ENCODE measurements at regions of chr12 and their contacts with region 1.

Region 1: GRCh38 chr12:1939801-1940607 is 21.6 kb upstream of the CACNA2D4 start:
- DNase-seq: peak; percentile 83 to 96 (median 88)
- ATAC-seq: peak; percentile 76
- H3K4me3 ChIP-seq: no peak overlapping the region
- H3K27ac ChIP-seq: no peak overlapping the region
- H3K4me1 ChIP-seq: peaks cover 0 to 8% of the 10 kb centered on the region in 2 donors
- H3K27me3 ChIP-seq: no peaks in the 10 kb centered on the region
- CTCF ChIP-seq: peak; percentile 91 to 100

Region 2: DNA sequence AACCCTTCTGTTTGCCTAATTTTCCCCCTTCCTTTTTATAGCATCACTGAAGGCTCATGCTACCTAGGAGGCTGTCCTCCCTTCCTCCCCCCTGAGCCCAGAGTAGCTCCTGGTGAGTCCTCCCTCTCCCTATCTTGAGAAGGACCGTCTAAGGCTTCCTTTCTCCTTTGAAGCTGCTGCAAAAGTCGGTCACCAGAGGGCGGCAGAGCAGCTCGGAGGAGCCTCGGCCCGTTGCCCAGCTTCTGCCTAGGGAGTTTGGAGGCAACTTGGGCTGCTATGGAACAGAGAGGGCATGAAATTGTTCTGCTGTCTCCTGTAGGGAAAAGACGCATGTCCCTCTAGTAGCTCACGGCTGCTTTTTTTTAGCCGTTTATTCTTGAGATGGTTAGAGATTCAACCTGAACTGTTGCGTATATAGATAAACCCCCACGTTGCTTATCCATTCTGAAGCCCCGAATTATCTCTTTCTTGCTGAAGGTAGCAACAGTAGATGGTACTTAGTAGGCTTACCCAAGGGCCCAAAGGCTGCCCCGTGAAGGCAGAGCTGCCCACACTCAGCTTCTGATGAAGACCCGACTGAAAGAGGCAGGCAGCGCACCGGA is 305.3 kb before region 1 on chr12:
- intact Hi-C with region 1: loop called in 1 of 2 experiments (anchors 10 kb)
- DNase-seq: peak in 3 of 4 donors; percentile 80 to 93 (median 81)
- ATAC-seq: peak; percentile 82
- H3K4me3 ChIP-seq: no peak overlapping the region
- H3K27ac ChIP-seq: no peak overlapping the region
- H3K4me1 ChIP-seq: peaks cover 9 to 52% of the 10 kb centered on the region in 2 donors
- H3K27me3 ChIP-seq: peaks cover 6 to 26% of the 10 kb centered on the region in 2 donors
- CTCF ChIP-seq: peak; percentile 71 to 80

Region 3: DNA sequence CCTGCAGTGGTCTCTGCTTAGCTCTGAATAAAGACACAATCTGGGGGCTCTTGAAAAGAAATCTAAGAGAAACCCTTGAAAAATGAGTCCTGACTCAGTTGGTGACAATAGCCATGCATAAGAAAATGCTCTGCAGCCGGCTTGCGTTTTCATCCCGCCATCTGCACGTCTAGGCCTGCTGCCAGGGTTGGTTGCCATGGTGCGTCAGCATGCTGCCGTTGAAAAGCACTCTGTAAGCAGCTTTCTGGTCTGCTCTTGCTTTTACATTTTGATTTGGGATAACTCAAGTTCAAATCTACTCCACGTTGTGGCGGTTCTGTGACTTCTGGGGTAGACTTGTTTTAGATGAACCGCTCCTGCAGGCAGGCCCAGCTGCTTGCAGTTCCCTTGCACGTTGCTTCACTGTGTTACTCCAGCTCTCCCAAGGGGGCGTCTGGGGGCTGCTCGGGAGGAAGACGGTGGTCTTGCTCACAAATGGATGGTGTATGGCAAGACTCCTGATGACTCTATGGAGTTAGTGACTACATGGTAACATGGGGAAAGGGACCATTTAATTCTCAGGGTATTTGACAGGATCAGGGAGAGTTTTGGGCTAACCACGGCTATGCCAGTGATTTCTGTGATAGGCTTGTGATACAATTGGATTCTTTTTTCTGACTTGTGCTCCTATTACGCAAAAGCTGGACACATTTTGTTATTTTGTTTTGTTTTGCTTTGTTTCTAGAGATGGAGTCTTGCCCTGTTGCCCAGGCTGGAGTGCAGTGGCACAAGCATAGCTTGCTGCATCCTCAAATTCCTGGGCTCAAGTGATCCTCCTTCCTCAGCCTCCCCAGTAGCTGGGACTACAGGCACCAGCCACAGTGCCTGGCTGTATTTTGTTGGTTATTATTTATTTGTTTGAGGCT is 295.2 kb before region 1 on chr12:
- intact Hi-C with region 1: loop called (anchors 10 kb)
- DNase-seq: peak; percentile 65 to 94 (median 85)
- ATAC-seq: peak; percentile 70
- H3K4me3 ChIP-seq: no peak overlapping the region
- H3K27ac ChIP-seq: no peak overlapping the region
- H3K4me1 ChIP-seq: peaks cover 0 to 22% of the 10 kb centered on the region in 2 donors
- H3K27me3 ChIP-seq: no peaks in the 10 kb centered on the region
- CTCF ChIP-seq: no peak

Region 4: GRCh38 chr12:1795785-1796514 is 144.1 kb before region 1 on chr12:
- intact Hi-C with region 1: loop called (anchors 5 to 10 kb)
- DNase-seq: peak; percentile 87 to 100 (median 95)
- ATAC-seq: peak; percentile 97
- H3K4me3 ChIP-seq: peak overlapping the region; percentile 68 to 80
- H3K27ac ChIP-seq: peak overlapping the region; percentile 83 to 97
- H3K4me1 ChIP-seq: peaks cover 0 to 34% of the 10 kb centered on the region in 2 donors
- H3K27me3 ChIP-seq: no peaks in the 10 kb centered on the region
- CTCF ChIP-seq: peak; percentile 99 to 100